ENCODE measurements at regions of chr21 and their contacts with region 1.

Region 1: GRCh38 chr21:15592271-15592860 is 137.4 kb upstream of the USP25 start:
- DNase-seq: peak; percentile 89
- ATAC-seq: peak; percentile 90
- H3K4me3 ChIP-seq: peak overlapping the region; percentile 57
- H3K27ac ChIP-seq: peak overlapping the region; percentile 96
- H3K4me1 ChIP-seq: peaks cover 25% of the 10 kb centered on the region
- H3K27me3 ChIP-seq: no peaks in the 10 kb centered on the region
- CTCF ChIP-seq: peak; percentile 91

Region 2: GRCh38 chr21:14403681-14404318 is 1188.6 kb before region 1 on chr21:
- CTCF ChIA-PET with region 1: no interaction called
- POLR2A ChIA-PET with region 1: no interaction called
- intact Hi-C with region 1: loop called (anchors 2 kb)
- DNase-seq: peak; percentile 65
- ATAC-seq: peak; percentile 80
- H3K4me3 ChIP-seq: no peak overlapping the region
- H3K27ac ChIP-seq: no peak overlapping the region
- H3K4me1 ChIP-seq: no peaks in the 10 kb centered on the region
- H3K27me3 ChIP-seq: no peaks in the 10 kb centered on the region
- CTCF ChIP-seq: peak; percentile 86

Region 3: DNA sequence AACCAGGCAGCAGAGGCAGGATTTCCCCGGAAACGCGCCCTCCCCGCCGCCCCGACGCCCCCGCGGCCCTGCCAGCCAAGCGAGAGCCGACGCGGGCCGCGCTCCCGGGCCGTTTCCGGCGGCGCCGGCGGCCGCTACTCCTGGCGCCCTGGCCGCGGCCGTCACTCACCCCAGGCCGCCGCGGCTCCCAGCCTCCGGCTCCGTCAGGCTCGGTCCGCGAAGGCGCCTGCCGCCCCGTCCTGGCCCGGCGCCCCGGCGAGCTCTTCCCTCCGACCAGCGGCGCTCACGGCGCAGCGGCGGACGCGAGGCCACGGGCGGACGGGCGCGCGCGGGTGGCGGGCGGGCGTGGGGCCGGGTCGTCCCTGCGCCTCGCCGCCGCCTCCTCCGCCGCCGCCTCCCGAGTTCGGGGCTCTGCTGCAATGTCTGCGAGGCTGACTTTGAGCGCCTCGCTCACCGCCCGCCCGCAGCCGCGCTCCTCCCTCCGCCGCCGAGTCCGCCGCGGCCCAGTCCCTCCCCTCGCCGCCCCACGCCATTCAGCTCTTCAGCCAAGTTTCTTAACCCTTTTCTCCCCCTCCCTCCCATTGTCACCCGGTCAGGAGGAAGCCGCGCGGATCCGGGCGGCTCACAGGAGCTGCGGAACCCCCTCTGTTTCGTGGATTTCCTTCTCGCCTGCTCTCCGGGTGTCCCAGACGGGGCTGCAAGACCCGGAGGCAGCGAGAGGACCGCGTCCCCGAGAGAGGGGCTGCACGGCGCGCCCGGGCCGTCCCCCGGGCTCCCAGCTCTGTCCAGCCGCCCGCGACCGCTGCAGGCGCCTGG is 527.6 kb before region 1 on chr21 and contains the start of gene NRIP1:
- CTCF ChIA-PET with region 1: interaction called, 3 read pairs
- POLR2A ChIA-PET with region 1: no interaction called
- intact Hi-C with region 1: loop called (anchors 1 kb)
- DNase-seq: peak; percentile 89
- ATAC-seq: peak; percentile 64
- H3K4me3 ChIP-seq: peak within 1 kb of the TSS; percentile 85
- H3K27ac ChIP-seq: peak within 1 kb of the TSS; percentile 72
- H3K4me1 ChIP-seq: peaks cover 27% of the 10 kb centered on the region
- H3K27me3 ChIP-seq: no peaks in the 10 kb centered on the region
- CTCF ChIP-seq: no peak
- total RNA-seq, gene NRIP1: 68.0 and 69.2 TPM in 2 replicates

Region 4: DNA sequence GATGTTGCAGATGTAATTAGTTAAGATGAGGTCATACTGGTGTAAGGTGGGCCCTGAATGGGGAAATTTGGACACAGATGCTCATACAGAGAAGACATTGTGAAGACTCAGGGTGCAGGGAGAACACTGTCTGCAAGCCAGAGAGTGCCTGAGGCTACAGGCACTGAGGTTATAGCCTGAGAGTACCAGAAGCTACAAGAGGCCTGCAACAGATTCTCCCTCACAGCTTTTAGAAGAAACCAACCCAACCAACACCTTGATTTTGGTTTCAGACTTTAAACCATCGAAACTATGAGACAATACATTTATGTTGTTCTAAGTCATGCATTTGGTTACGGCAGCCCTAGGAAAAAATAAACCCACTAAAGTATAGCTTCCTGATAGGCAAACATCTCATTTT is 184.3 kb before region 1 on chr21:
- CTCF ChIA-PET with region 1: no interaction called
- POLR2A ChIA-PET with region 1: no interaction called
- intact Hi-C with region 1: no loop called
- DNase-seq: no peak
- ATAC-seq: no peak
- H3K4me3 ChIP-seq: no peak overlapping the region
- H3K27ac ChIP-seq: no peak overlapping the region
- H3K4me1 ChIP-seq: no peaks in the 10 kb centered on the region
- H3K27me3 ChIP-seq: no peaks in the 10 kb centered on the region
- CTCF ChIP-seq: no peak

Region 5: GRCh38 chr21:15631366-15631765 is 39.0 kb after region 1 on chr21:
- CTCF ChIA-PET with region 1: no interaction called
- POLR2A ChIA-PET with region 1: no interaction called
- intact Hi-C with region 1: loop called (anchors 1 kb)
- DNase-seq: peak; percentile 81
- ATAC-seq: peak; percentile 88
- H3K4me3 ChIP-seq: no peak overlapping the region
- H3K27ac ChIP-seq: peak overlapping the region; percentile 47
- H3K4me1 ChIP-seq: peaks cover 20% of the 10 kb centered on the region
- H3K27me3 ChIP-seq: no peaks in the 10 kb centered on the region
- CTCF ChIP-seq: no peak

Region 6: GRCh38 chr21:15682186-15682895 is 90.0 kb after region 1 on chr21:
- CTCF ChIA-PET with region 1: no interaction called
- POLR2A ChIA-PET with region 1: no interaction called
- intact Hi-C with region 1: loop called (anchors 2 kb)
- DNase-seq: peak; percentile 80
- ATAC-seq: peak; percentile 58
- H3K4me3 ChIP-seq: peak overlapping the region; percentile 8; the same call in 1 of the 2 replicates
- H3K27ac ChIP-seq: peak overlapping the region; percentile 83
- H3K4me1 ChIP-seq: peaks cover 37% of the 10 kb centered on the region
- H3K27me3 ChIP-seq: no peaks in the 10 kb centered on the region
- CTCF ChIP-seq: no peak

Region 7: DNA sequence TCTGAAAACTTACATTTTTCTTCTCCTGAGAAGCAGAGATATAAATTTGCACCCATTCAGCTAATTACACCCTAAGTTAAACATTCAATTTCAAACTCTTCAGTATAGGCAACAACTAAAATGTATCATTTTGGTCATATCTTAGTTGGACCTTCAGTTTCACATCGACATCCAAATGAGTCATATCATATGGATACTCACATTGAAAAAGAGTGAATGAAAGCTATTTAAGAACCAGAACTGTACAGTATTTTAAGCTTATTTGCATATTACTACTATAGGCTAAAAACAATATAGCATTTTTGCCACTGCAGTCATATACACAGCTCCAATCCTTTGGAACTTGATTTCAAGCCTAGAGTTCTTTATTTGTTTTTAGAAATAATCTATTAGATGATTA is 171.0 kb after region 1 on chr21:
- CTCF ChIA-PET with region 1: no interaction called
- POLR2A ChIA-PET with region 1: no interaction called
- intact Hi-C with region 1: no loop called
- DNase-seq: no peak
- ATAC-seq: no peak
- H3K4me3 ChIP-seq: no peak overlapping the region
- H3K27ac ChIP-seq: no peak overlapping the region
- H3K4me1 ChIP-seq: peaks cover 10% of the 10 kb centered on the region
- H3K27me3 ChIP-seq: no peaks in the 10 kb centered on the region
- CTCF ChIP-seq: no peak

Measured in PC-3 (cell line).